ENCODE measurements at regions of chr7 and their contacts with region 1.

Region 1: GRCh38 chr7:139645572-139646523 is 122.4 kb downstream of the CLEC2L start:
- DNase-seq: peak; percentile 75 to 81
- H3K4me3 ChIP-seq: no peak overlapping the region
- H3K27ac ChIP-seq: no peak overlapping the region
- H3K4me1 ChIP-seq: no peaks in the 10 kb centered on the region
- H3K27me3 ChIP-seq: no peaks in the 10 kb centered on the region
- CTCF ChIP-seq: peak; percentile 85 to 90 (median 88)
- POLR2A ChIP-seq: peak in 1 of 2 donors; percentile 12

Region 2: GRCh38 chr7:139441961-139442360 is 203.9 kb before region 1 on chr7:
- intact Hi-C with region 1: no loop called
- DNase-seq: no peak
- H3K4me3 ChIP-seq: no peak overlapping the region
- H3K27ac ChIP-seq: no peak overlapping the region
- H3K4me1 ChIP-seq: no peaks in the 10 kb centered on the region
- H3K27me3 ChIP-seq: no peaks in the 10 kb centered on the region
- CTCF ChIP-seq: no peak
- POLR2A ChIP-seq: no peak

Region 3: DNA sequence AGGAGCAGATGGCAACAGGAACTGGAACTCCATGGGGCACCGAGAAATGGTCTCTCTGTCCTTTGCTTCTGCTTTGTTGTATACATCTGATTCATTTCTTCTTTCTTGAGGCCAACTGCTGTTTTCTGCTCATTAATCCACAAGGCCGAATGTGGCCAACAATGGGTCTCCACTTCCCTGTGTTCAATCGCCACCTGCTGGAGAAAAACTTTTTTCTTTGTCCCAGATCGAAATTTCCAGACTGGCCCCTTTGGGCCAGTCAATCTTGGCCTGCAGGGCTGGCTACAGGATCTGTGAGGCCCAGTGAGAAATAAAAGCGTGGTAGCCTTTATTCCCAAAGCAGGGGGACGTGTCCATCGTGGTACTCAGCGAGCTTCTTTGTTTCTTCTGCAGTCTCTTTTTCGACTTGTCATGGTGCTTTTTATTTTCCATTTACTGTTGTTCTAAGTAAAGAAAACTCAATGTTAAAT is 358.1 kb after region 1 on chr7:
- intact Hi-C with region 1: loop called (anchors 10 kb)
- DNase-seq: no peak
- H3K4me3 ChIP-seq: no peak overlapping the region
- H3K27ac ChIP-seq: no peak overlapping the region
- H3K4me1 ChIP-seq: no peaks in the 10 kb centered on the region
- H3K27me3 ChIP-seq: no peaks in the 10 kb centered on the region
- CTCF ChIP-seq: peak; percentile 20 to 34 (median 25)
- POLR2A ChIP-seq: no peak